ENCODE measurements at regions of chr16 and their contacts with region 1.

Region 1: GRCh38 chr16:67719048-67719777 is at the start of gene GFOD2:
- DNase-seq: peak; percentile 78 to 98
- H3K4me3 ChIP-seq: peak within 1 kb of the TSS; percentile 87 to 99
- H3K27ac ChIP-seq: peak within 1 kb of the TSS; percentile 87 to 94
- H3K4me1 ChIP-seq: peaks cover 0 to 12% of the 10 kb centered on the region in 2 donors
- H3K27me3 ChIP-seq: no peaks in the 10 kb centered on the region
- CTCF ChIP-seq: no peak
- total RNA-seq, gene GFOD2: 43.5 TPM

Region 2: GRCh38 chr16:67480833-67481560 is 238.2 kb before region 1 on chr16 and contains the start of gene ATP6V0D1:
- intact Hi-C with region 1: loop called (anchors 2 kb)
- DNase-seq: peak; percentile 88 to 99
- H3K4me3 ChIP-seq: peak within 1 kb of the TSS; percentile 56 to 73
- H3K27ac ChIP-seq: peak within 1 kb of the TSS; percentile 74 to 80
- H3K4me1 ChIP-seq: peaks cover 4 to 24% of the 10 kb centered on the region in 2 donors
- H3K27me3 ChIP-seq: no peaks in the 10 kb centered on the region
- CTCF ChIP-seq: peak; percentile 91 to 94 (median 93)
- total RNA-seq, gene ATP6V0D1: 64.3 TPM

Measured in ascending aorta (tissue), 2 donors.